ENCODE measurements at regions of chr12 and their contacts with region 1.

Region 1: GRCh38 chr12:128387811-128388422 is 120.9 kb downstream of the TMEM132C start:
- DNase-seq: peak in 41 of 42 donors; percentile 47 to 89 (median 74)

Region 2: DNA sequence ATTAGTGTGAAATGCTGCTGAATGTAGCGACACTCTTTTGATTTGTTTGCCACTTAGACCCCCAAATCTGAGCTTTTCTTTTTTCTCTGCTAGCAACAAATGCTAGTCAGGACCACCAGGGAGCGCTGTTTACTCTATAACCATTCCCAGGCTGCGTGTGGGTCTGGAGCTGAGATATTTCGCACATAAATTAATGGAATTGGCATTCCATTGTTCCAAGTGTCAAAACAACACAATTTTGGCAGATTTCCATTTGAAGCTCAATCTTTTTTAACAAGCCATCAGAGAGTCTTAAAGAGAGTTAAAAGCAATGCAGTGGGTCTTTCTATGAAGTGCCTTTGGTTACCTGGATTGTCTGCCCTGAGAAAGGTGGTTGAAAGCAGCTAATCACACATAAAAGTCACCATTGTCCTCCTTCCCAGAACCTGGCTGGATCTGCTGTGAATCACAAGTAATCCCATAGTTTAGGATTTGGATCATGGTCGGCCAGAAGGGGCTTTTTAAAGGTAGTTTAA is 128.3 kb before region 1 on chr12:
- intact Hi-C with region 1: loop called (anchors 2 kb)
- DNase-seq: peak; percentile 35 to 90 (median 73)

Measured in head of caudate nucleus (tissue), 42 donors.